H1 (cell line): ENCODE measurements at regions of chr11 and their contacts with region 1.

Region 1: DNA sequence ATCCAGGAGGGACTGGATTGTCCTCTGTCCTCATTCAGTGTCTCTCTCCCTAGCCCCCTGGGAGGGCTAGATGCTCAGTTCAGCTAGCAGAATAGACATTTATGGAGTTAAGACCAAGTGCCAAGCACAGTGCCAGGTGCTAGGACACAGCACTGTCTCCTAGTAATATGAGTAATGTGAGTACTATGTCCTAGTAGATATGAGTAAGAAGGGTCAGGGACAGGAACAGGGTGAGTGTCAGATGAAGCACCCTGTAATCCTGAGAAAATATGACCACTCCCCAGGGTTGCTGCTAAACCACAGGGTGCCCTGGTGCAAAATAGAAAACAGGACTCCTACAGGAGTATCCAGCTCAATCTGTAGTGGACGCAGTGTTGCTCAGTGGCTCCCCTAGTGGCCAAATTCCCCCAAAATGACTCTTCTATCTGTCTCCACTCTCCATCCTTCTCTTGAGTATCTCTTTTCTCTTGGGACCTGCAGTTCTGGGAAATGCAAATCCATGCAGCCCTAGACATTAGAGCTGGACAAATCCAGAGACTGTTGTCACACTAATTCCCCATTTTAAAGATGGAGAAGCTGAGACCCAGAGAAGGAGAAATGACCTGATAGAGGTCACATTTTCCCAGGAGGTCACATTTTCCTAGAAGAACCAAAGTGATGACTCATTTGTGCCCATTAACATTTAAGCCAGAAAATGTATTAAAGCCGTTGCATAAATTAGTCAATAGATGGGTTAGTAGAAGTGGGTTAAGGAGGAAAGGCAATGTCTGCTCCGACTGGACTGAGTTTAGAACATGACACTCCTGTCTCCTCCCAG is 214.3 kb downstream of the NXPE2 start:
- DNase-seq: peak in 1 of 2 experiments; percentile 83
- H3K4me3 ChIP-seq: no peak overlapping the region
- H3K27ac ChIP-seq: no peak overlapping the region
- H3K4me1 ChIP-seq: peaks cover 0 to 6% (median 4%) of the 10 kb centered on the region in 4 experiments; a peak in 3 of 7 replicates
- H3K27me3 ChIP-seq: no peaks in the 10 kb centered on the region
- CTCF ChIP-seq: peak; percentile 51 to 85 (median 59); a peak in 3 of 4 replicates
- EP300 ChIP-seq: no peak
- POLR2A ChIP-seq: no peak
- RAD21 ChIP-seq: peak; percentile 51 to 56

Region 2: DNA sequence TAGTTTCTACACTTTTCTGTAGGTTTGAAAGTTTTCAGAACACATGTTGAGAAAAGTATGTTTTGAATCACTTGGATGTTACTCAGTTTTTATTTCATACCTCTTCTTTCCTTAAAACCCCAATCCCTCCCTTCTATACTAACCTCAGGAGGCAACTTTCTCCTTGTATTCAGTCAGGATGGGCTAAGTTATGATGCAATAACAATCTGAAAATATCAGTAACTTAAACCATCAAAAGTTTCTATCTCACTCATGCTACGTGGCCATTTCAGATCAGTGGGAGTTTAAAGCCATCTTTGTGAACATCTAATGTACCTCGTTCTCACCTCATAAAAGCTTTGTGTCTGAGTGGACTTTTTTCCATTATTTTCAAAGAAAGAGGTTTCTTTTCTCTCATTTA is 128.0 kb before region 1 on chr11:
- CTCF ChIA-PET with region 1: no interaction called
- POLR2A ChIA-PET with region 1: no interaction called
- DNase-seq: no peak
- H3K4me3 ChIP-seq: no peak overlapping the region
- H3K27ac ChIP-seq: no peak overlapping the region
- H3K4me1 ChIP-seq: no peaks in the 10 kb centered on the region
- H3K27me3 ChIP-seq: no peaks in the 10 kb centered on the region; a peak in 1 of 7 replicates
- CTCF ChIP-seq: no peak
- EP300 ChIP-seq: no peak
- POLR2A ChIP-seq: no peak
- RAD21 ChIP-seq: no peak

Region 3: GRCh38 chr11:114774599-114775361 is 117.8 kb before region 1 on chr11:
- CTCF ChIA-PET with region 1: interaction called, 14 read pairs
- POLR2A ChIA-PET with region 1: no interaction called
- DNase-seq: peak; percentile 50 to 86
- H3K4me3 ChIP-seq: no peak overlapping the region
- H3K27ac ChIP-seq: no peak overlapping the region
- H3K4me1 ChIP-seq: peaks cover 4 to 14% (median 10%) of the 10 kb centered on the region in 4 experiments; a peak in 4 of 7 replicates
- H3K27me3 ChIP-seq: peaks cover 0 to 11% (median 5%) of the 10 kb centered on the region in 4 experiments; a peak in 5 of 7 replicates
- CTCF ChIP-seq: peak; percentile 83 to 96 (median 88)
- EP300 ChIP-seq: no peak
- POLR2A ChIP-seq: no peak
- RAD21 ChIP-seq: peak; percentile 98 to 99

Region 4: DNA sequence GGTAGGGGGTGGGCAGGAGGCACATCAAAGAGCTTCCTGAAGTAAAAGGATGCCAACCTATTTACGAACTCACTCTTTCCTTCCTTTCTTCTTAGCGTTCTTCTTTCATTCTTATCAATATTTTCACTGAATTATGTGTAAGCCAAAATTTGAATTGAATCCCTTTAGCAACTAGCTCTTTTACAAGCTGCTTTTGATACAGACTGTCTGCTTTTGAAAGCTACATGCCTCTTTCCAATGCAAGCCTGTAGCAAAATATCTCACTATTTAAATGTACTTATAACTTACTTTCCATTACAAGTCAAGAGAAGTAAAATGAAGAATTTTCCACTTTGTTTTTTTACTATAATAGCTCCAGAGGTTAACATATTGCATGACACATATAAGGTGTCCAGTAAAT is 27.7 kb before region 1 on chr11:
- CTCF ChIA-PET with region 1: interaction called, 17 read pairs
- POLR2A ChIA-PET with region 1: no interaction called
- DNase-seq: no peak
- H3K4me3 ChIP-seq: no peak overlapping the region
- H3K27ac ChIP-seq: no peak overlapping the region
- H3K4me1 ChIP-seq: no peaks in the 10 kb centered on the region
- H3K27me3 ChIP-seq: no peaks in the 10 kb centered on the region; a peak in 1 of 7 replicates
- CTCF ChIP-seq: no peak
- EP300 ChIP-seq: no peak
- POLR2A ChIP-seq: no peak
- RAD21 ChIP-seq: no peak

Region 5: GRCh38 chr11:114909866-114910265 is 17.3 kb after region 1 on chr11:
- CTCF ChIA-PET with region 1: interaction called, 40 read pairs
- POLR2A ChIA-PET with region 1: no interaction called
- DNase-seq: peak; percentile 5 to 53
- H3K4me3 ChIP-seq: no peak overlapping the region
- H3K27ac ChIP-seq: no peak overlapping the region
- H3K4me1 ChIP-seq: no peaks in the 10 kb centered on the region; a peak in 1 of 7 replicates
- H3K27me3 ChIP-seq: no peaks in the 10 kb centered on the region
- CTCF ChIP-seq: peak; percentile 23 to 65 (median 52)
- EP300 ChIP-seq: no peak
- POLR2A ChIP-seq: no peak
- RAD21 ChIP-seq: peak; percentile 47 to 65

Region 6: DNA sequence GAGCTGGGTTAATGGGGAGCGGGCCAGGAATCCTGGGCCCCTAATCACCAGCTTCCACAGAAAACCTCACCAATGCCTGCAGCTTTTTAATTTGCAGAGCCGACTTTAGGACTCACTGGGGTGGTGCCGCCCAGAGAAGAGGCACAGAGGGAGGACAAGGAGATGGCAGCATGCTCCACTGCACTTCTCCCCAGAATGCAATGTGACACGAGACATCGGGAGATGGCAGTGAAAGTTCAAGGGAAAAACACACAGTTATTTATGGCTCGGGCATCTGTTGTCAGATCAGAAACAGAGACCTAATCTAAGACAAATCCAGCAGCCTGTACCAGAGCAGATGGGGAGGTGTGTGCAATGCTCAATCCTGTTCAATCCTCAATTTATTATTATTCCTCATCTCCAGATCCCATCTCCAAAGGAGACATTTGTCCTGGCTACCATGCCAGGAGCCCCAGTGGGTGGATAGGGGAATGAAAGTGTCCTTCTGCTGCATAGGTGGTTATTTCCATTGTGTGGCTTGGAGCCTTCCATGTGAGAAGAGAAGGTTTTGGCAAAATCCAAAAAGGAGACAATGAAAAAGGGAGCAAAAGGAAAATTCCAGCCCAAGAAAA is 35.8 kb after region 1 on chr11:
- CTCF ChIA-PET with region 1: interaction called, 10 read pairs
- POLR2A ChIA-PET with region 1: no interaction called
- DNase-seq: no peak
- H3K4me3 ChIP-seq: no peak overlapping the region
- H3K27ac ChIP-seq: no peak overlapping the region
- H3K4me1 ChIP-seq: no peaks in the 10 kb centered on the region
- H3K27me3 ChIP-seq: no peaks in the 10 kb centered on the region
- CTCF ChIP-seq: no peak
- EP300 ChIP-seq: no peak
- POLR2A ChIP-seq: no peak
- RAD21 ChIP-seq: no peak